MCF 10A (cell line): ENCODE measurements at regions of chr10 and their contacts with region 1.

Region 1: GRCh38 chr10:3785257-3785850 is 345 bp upstream of the KLF6 start:
- DNase-seq: peak; percentile 98
- H3K4me3 Mint-ChIP-seq: peak overlapping the region; percentile 96
- H3K27ac Mint-ChIP-seq: peak overlapping the region; percentile 100
- H3K4me1 Mint-ChIP-seq: peaks cover 17% of the 10 kb centered on the region
- H3K27me3 Mint-ChIP-seq: no peaks in the 10 kb centered on the region
- CTCF ChIP-seq: no peak

Region 2: GRCh38 chr10:3472287-3473051 is 312.9 kb before region 1 on chr10:
- CTCF ChIA-PET with region 1: interaction called, 3 read pairs
- POLR2A ChIA-PET with region 1: interaction called, 85 read pairs
- intact Hi-C with region 1: no loop called
- DNase-seq: peak; percentile 67
- H3K4me3 Mint-ChIP-seq: peak overlapping the region; percentile 13
- H3K27ac Mint-ChIP-seq: peak overlapping the region; percentile 74
- H3K4me1 Mint-ChIP-seq: peaks cover 44% of the 10 kb centered on the region
- H3K27me3 Mint-ChIP-seq: no peaks in the 10 kb centered on the region
- CTCF ChIP-seq: no peak

Region 3: GRCh38 chr10:3538658-3539531 is 246.5 kb before region 1 on chr10:
- CTCF ChIA-PET with region 1: no interaction called
- POLR2A ChIA-PET with region 1: no interaction called
- intact Hi-C with region 1: no loop called
- DNase-seq: peak; percentile 59
- H3K4me3 Mint-ChIP-seq: no peak overlapping the region
- H3K27ac Mint-ChIP-seq: no peak overlapping the region
- H3K4me1 Mint-ChIP-seq: peaks cover 17% of the 10 kb centered on the region
- H3K27me3 Mint-ChIP-seq: no peaks in the 10 kb centered on the region
- CTCF ChIP-seq: no peak

Region 4: GRCh38 chr10:3811291-3811870 is 26.0 kb after region 1 on chr10:
- CTCF ChIA-PET with region 1: interaction called, 5 read pairs
- POLR2A ChIA-PET with region 1: interaction called, 571 read pairs
- intact Hi-C with region 1: loop called (anchors 1 kb)
- DNase-seq: peak; percentile 89
- H3K4me3 Mint-ChIP-seq: peak overlapping the region; percentile 61
- H3K27ac Mint-ChIP-seq: peak overlapping the region; percentile 100
- H3K4me1 Mint-ChIP-seq: peaks cover 51% of the 10 kb centered on the region
- H3K27me3 Mint-ChIP-seq: no peaks in the 10 kb centered on the region
- CTCF ChIP-seq: no peak

Region 5: DNA sequence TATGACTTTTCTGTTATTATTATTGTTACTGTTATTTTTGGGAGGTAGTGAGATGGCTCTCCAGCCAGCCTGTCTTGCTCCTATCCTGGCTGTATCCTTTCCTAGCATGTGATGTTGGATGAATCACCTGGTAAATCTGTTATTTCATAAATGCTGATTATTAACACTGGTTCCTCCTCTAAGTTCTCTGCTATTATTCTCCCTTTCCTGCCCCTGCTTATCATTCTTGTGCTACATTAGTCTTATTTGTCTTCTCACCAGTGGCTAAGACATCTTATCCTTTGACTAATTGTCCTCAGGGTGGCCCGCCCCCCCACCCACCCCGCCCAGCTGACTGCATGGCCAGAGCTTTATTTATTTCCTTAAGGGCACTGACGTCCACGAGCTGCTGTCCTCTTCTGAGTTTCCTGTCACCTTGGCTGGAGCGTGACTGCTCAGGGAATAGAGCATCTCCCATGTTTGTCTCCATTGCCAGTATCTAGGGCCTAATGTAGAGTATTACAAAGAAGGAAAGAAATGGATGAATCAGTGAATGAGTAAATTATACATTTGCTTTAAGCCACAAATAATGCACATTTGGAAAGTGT is 109.8 kb after region 1 on chr10:
- CTCF ChIA-PET with region 1: no interaction called
- POLR2A ChIA-PET with region 1: interaction called, 147 read pairs
- intact Hi-C with region 1: no loop called
- DNase-seq: peak; percentile 10
- H3K4me3 Mint-ChIP-seq: no peak overlapping the region
- H3K27ac Mint-ChIP-seq: no peak overlapping the region
- H3K4me1 Mint-ChIP-seq: peaks cover 31% of the 10 kb centered on the region
- H3K27me3 Mint-ChIP-seq: no peaks in the 10 kb centered on the region
- CTCF ChIP-seq: no peak

Region 6: GRCh38 chr10:4003348-4003973 is 218.1 kb after region 1 on chr10:
- CTCF ChIA-PET with region 1: no interaction called
- POLR2A ChIA-PET with region 1: no interaction called
- intact Hi-C with region 1: no loop called
- DNase-seq: no peak
- H3K4me3 Mint-ChIP-seq: no peak overlapping the region
- H3K27ac Mint-ChIP-seq: no peak overlapping the region
- H3K4me1 Mint-ChIP-seq: no peaks in the 10 kb centered on the region
- H3K27me3 Mint-ChIP-seq: no peaks in the 10 kb centered on the region
- CTCF ChIP-seq: no peak

Region 7: DNA sequence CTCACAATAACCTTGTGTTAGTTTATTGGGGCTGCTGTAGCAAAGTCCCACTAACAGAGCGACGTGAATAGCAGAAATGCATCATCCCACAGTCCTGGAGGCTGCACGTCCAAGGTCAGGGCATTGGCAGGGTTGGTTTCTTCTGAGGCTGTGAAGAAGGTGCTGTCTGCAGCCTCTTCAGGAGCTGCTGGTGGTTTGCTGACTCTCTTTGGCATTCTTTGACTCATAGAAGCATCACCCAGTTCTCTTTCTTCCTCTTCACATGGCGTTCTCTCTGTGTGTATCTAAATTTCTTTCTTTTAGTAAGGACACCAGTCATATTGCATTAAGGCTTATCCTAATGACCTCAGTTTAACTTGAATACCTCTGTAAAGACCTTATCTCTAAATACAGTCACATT is 428.1 kb after region 1 on chr10:
- CTCF ChIA-PET with region 1: no interaction called
- POLR2A ChIA-PET with region 1: no interaction called
- intact Hi-C with region 1: no loop called
- DNase-seq: no peak
- H3K4me3 Mint-ChIP-seq: no peak overlapping the region
- H3K27ac Mint-ChIP-seq: no peak overlapping the region
- H3K4me1 Mint-ChIP-seq: no peaks in the 10 kb centered on the region
- H3K27me3 Mint-ChIP-seq: no peaks in the 10 kb centered on the region
- CTCF ChIP-seq: no peak

Region 8: GRCh38 chr10:4307910-4308309 is 522.6 kb after region 1 on chr10:
- CTCF ChIA-PET with region 1: interaction called, 3 read pairs
- POLR2A ChIA-PET with region 1: interaction called, 16 read pairs
- intact Hi-C with region 1: no loop called
- DNase-seq: no peak
- H3K4me3 Mint-ChIP-seq: no peak overlapping the region
- H3K27ac Mint-ChIP-seq: no peak overlapping the region
- H3K4me1 Mint-ChIP-seq: no peaks in the 10 kb centered on the region
- H3K27me3 Mint-ChIP-seq: no peaks in the 10 kb centered on the region
- CTCF ChIP-seq: no peak

Region 9: DNA sequence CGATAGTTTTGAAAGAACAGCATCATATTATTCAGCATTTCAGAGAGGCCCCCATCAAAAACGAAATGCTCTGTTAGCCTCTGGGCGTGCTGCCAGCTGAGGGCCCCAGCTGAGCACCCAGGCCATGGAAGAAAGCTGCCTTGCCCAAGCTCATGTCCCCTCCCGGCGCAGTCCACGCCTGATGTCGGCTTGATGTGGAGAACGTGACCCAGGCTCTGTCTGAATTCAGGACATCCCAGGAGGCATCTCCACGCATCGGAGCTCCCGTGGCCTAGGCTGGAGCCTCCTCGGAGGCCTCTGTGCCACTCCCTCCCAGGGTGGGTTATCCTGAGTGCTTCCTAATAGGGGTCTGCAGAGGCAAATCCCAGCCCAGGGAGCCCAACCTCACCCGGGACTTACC is 822.3 kb after region 1 on chr10:
- CTCF ChIA-PET with region 1: no interaction called
- POLR2A ChIA-PET with region 1: no interaction called
- intact Hi-C with region 1: no loop called
- DNase-seq: no peak
- H3K4me3 Mint-ChIP-seq: no peak overlapping the region
- H3K27ac Mint-ChIP-seq: no peak overlapping the region
- H3K4me1 Mint-ChIP-seq: no peaks in the 10 kb centered on the region
- H3K27me3 Mint-ChIP-seq: no peaks in the 10 kb centered on the region
- CTCF ChIP-seq: no peak

Region 10: GRCh38 chr10:4663162-4663904 is 878.0 kb after region 1 on chr10:
- CTCF ChIA-PET with region 1: interaction called, 3 read pairs
- POLR2A ChIA-PET with region 1: interaction called, 69 read pairs
- intact Hi-C with region 1: no loop called
- DNase-seq: peak; percentile 99
- H3K4me3 Mint-ChIP-seq: peak overlapping the region; percentile 66
- H3K27ac Mint-ChIP-seq: peak overlapping the region; percentile 100
- H3K4me1 Mint-ChIP-seq: peaks cover 28% of the 10 kb centered on the region
- H3K27me3 Mint-ChIP-seq: no peaks in the 10 kb centered on the region
- CTCF ChIP-seq: no peak